ENCODE measurements at regions of chr11 and their contacts with region 1.

Region 1: GRCh38 chr11:10455637-10456487 is 798 bp downstream of the AMPD3 start:
- DNase-seq: peak; percentile 45 to 85 (median 67)
- H3K4me3 ChIP-seq: peak overlapping the region; percentile 71
- H3K4me3 Mint-ChIP-seq: peak overlapping the region; percentile 87 to 97 (median 93)
- H3K27ac ChIP-seq: peak overlapping the region; percentile 70
- H3K27ac Mint-ChIP-seq: peak overlapping the region; percentile 94 to 99 (median 97)
- H3K4me1 ChIP-seq: peaks cover 66% of the 10 kb centered on the region
- H3K4me1 Mint-ChIP-seq: peaks cover 72 to 86% (median 86%) of the 10 kb centered on the region in 3 donors
- H3K27me3 ChIP-seq: no peaks in the 10 kb centered on the region
- H3K27me3 Mint-ChIP-seq: no peaks in the 10 kb centered on the region

Region 2: GRCh38 chr11:10441652-10442503 is 14.0 kb before region 1 on chr11:
- CTCF ChIA-PET with region 1: interaction called, 13 read pairs
- POLR2A ChIA-PET with region 1: interaction called, 3 read pairs
- DNase-seq: peak in 2 of 5 donors; percentile 19 to 22
- H3K4me3 ChIP-seq: no peak overlapping the region
- H3K4me3 Mint-ChIP-seq: peak overlapping the region in 3 of 7 donors; percentile 35 to 61 (median 52)
- H3K27ac ChIP-seq: no peak overlapping the region
- H3K27ac Mint-ChIP-seq: peak overlapping the region in 7 of 8 donors; percentile 20 to 64 (median 47)
- H3K4me1 ChIP-seq: peaks cover 22% of the 10 kb centered on the region
- H3K4me1 Mint-ChIP-seq: peaks cover 10 to 28% (median 12%) of the 10 kb centered on the region in 3 donors
- H3K27me3 ChIP-seq: no peaks in the 10 kb centered on the region
- H3K27me3 Mint-ChIP-seq: peaks cover 0 to 1% of the 10 kb centered on the region in 2 donors

Region 3: DNA sequence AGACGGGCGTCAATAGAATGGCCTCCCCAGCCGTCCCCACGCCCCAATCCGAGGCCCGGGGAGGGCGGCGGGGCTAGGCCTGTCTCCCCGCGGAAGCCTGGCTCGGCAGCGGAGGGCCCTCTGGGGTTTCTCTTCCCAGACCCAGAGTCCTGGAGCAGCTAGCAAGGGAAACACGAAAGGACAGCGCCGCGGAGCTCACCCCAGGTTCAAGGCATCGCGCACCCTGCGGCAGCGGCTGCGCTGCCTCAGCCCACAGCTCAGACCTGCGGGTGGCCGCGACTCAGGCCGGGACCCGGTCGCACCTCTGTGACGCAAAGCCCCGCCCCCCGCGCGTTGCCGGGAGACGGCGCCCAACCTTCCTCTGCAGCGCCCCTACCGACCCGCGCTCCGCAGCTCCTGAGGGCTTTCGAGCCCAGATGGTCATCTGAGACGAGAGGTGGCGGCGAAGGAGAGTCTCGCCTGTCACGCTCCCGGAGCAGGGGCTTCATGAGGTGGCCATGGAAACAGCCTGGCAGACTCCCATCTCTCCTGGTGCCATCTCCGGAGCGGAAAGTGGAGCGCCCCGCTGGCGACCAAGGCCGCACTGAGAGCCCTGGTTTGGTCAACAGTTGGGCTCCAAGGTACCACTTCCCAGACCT is 85.2 kb after region 1 on chr11 and contains the start of gene RNF141:
- CTCF ChIA-PET with region 1: interaction called, 19 read pairs
- POLR2A ChIA-PET with region 1: interaction called, 9 read pairs
- DNase-seq: peak; percentile 91 to 94 (median 93)
- H3K4me3 ChIP-seq: peak within 1 kb of the TSS; percentile 76
- H3K4me3 Mint-ChIP-seq: peak within 1 kb of the TSS; percentile 87 to 96 (median 90)
- H3K27ac ChIP-seq: peak within 1 kb of the TSS; percentile 80
- H3K27ac Mint-ChIP-seq: peak within 1 kb of the TSS; percentile 83 to 96 (median 93)
- H3K4me1 ChIP-seq: peaks cover 15% of the 10 kb centered on the region
- H3K4me1 Mint-ChIP-seq: peaks cover 17 to 33% (median 22%) of the 10 kb centered on the region in 3 donors
- H3K27me3 ChIP-seq: no peaks in the 10 kb centered on the region
- H3K27me3 Mint-ChIP-seq: peaks cover 2 to 3% of the 10 kb centered on the region in 2 donors
- total RNA-seq, gene RNF141: 19.6 to 20.0 TPM

Region 4: DNA sequence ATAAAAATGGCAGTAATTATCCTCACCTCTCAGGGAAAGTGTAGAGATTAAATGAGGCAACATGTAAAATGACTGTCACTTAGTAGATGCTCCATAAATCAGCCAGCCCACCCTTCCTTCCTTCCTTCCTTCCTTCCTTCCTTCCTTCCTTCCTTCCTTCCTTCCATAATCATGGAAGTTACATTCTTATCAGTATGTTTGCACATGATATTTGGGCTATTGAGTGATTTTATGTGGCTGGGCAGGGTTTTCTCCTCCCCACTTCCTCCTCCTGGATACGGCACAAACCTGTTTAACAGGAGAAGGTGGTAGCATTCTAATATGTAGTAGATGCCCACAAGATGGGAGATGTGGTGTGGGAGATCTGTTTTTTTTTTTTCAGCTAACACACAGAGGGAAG is 100.7 kb after region 1 on chr11:
- CTCF ChIA-PET with region 1: no interaction called
- POLR2A ChIA-PET with region 1: no interaction called
- DNase-seq: no peak
- H3K4me3 ChIP-seq: no peak overlapping the region
- H3K4me3 Mint-ChIP-seq: no peak overlapping the region
- H3K27ac ChIP-seq: no peak overlapping the region
- H3K27ac Mint-ChIP-seq: no peak overlapping the region
- H3K4me1 ChIP-seq: no peaks in the 10 kb centered on the region
- H3K4me1 Mint-ChIP-seq: no peaks in the 10 kb centered on the region
- H3K27me3 ChIP-seq: no peaks in the 10 kb centered on the region
- H3K27me3 Mint-ChIP-seq: peaks cover 9 to 35% of the 10 kb centered on the region in 2 donors

Measured in CD8-positive, alpha-beta memory T cell (primary cell).